ENCODE measurements at regions of chr17 and their contacts with region 1.

Region 1: DNA sequence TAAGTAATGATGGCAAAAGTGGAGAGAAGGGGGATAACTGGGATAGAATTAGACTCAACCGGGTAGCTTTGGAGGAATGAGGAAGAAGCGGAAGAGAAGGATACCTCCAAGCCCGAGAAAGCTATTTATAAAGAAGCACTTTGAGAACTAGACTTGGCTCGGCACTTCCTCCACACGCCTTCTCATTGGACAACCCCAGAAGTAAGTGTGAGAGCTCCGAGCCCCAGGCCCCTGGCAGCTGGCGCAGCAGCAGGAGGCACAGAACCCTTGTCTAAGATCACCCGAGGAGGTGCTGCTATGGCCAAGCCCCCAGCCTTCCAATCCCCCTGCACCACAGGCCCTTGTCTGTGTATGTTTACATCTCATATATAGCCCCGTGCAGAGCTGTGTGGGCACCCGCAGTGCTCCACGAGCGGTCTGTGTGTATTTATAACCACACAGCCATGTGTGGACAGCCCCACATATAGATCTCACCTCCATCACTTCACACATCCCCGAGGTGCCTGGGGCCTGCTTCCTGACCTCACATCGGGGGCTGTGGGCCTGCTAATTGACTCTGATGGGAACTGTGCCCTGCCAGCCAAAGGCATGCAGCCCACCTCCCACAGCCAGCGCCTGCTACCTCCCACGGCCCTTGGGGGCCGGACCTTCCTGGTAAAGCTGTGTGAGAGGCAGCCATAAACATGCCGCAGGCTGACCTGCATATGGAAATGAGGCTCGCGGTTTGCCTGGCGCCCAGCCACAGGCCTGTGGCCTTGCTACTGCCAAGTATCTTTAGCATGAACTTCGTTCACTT is 96.2 kb downstream of the C17orf67 start:
- DNase-seq: no peak
- ATAC-seq: no peak

Region 2: DNA sequence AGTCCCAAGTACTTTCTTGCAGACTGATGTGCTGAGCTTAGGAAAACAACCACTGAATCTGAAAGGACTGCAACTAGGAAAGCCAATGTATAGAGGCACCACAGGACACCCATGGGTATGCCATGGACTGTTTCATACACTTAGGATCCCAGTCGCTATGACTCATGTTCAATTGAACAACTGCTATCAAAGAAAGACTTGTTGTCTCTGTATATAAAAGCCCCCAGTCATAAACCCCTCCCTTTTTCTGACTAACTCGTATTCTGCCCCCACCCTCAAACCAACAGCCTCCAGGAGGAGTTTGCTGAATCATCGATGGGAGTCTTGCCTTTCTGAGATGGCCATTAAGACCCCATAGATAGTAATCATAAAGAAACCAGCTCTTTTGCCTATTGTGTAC is 378.9 kb before region 1 on chr17:
- intact Hi-C with region 1: loop called (anchors 10 kb)
- DNase-seq: no peak
- ATAC-seq: no peak

Region 3: DNA sequence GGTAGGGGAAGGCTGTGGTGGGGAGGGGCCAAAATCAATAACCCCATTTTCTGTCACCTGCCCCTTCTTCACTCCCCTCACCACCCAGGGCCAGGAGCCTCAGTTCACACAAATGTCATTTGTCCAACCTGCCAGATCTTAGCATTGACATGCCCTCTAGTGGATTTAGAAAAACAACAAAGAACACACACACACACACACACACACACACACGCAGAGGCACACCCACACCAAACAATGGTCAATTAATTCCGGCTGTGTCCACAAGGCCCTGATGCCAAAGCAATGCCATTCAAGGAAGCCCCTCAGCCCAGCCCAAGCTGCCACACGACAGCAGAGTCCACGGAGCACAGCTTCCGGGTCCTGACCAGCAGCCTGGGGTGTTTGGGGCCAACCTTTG is 75.6 kb before region 1 on chr17:
- intact Hi-C with region 1: no loop called
- DNase-seq: no peak
- ATAC-seq: no peak

Region 4: DNA sequence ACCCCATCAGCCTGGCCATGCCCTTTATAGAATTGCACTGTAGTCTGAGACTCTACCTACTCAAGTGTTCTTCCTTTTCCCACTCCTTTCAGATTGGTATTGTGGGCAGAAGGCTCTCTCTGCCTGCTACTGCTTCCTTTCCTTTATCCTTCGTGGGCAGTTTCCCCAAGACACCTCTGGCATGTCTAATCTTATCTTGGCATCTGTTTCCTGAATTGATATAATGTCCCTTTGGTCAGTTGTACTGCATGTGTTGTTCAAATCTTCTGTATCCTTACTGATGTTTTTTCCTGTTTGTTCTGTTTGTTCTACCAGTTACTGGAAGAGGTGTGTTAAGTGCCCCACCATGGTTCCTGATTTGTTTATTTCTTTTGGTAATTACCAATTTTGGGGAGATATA is 489.2 kb after region 1 on chr17:
- intact Hi-C with region 1: loop called (anchors 5 kb)
- DNase-seq: no peak
- ATAC-seq: no peak

Region 5: GRCh38 chr17:58233543-58233942 is 1496.0 kb after region 1 on chr17:
- intact Hi-C with region 1: no loop called
- DNase-seq: no peak
- ATAC-seq: peak; percentile 53

Measured in sciatic nerve (tissue), 2 donors.